ENCODE measurements at regions of chr10 and their contacts with region 1.

Region 1: GRCh38 chr10:100962351-100963080 is 6.8 kb upstream of the SEMA4G start:
- DNase-seq: no peak
- H3K4me3 ChIP-seq: no peak overlapping the region
- H3K27ac ChIP-seq: no peak overlapping the region
- H3K4me1 ChIP-seq: no peaks in the 10 kb centered on the region
- H3K27me3 ChIP-seq: no peaks in the 10 kb centered on the region
- CTCF ChIP-seq: no peak

Region 2: GRCh38 chr10:100927266-100927665 is 35.2 kb before region 1 on chr10:
- CTCF ChIA-PET with region 1: interaction called, 3 read pairs
- dilution Hi-C with region 1: no loop called
- in situ Hi-C with region 1: no loop called
- intact Hi-C with region 1: loop called (anchors 5 kb)
- DNase-seq: no peak
- H3K4me3 ChIP-seq: no peak overlapping the region
- H3K27ac ChIP-seq: no peak overlapping the region
- H3K4me1 ChIP-seq: peaks cover 4% of the 10 kb centered on the region
- H3K27me3 ChIP-seq: no peaks in the 10 kb centered on the region
- CTCF ChIP-seq: no peak

Region 3: DNA sequence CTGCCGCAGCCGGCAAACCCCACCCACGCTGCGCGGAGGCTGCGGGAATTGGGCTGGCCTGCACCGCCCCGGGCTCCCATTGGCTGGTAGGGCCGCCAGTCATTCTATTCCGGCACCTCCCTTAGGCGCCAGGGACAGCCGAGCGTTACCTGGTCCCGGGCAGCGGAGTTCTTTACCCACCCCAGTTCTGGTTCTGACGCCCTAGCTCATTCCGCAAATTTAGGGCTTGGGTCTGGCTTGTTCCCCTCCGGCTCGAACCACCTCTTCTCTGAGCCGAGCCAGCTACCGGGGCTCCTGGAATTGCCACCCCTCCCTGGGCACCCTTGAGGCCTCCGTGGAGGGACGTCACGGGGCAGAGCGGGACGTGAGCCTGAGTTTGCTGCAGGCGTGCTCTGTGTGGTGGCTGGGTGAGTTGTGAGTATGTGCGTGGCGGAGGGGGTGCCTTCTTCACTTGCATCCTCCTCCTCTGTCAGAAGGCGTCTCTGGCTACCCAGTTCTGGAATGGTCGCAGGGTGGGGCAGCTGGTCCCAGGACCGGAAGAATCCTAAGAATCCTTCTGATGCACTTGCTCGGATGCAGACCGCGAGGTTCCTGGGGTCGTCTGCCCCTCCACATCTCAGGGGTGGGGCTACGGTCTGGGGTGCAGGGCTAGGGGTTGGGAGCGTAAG is 68.7 kb after region 1 on chr10 and contains the starts of genes PDZD7 and SFXN3:
- CTCF ChIA-PET with region 1: interaction called, 25 read pairs
- dilution Hi-C with region 1: no loop called
- in situ Hi-C with region 1: no loop called
- intact Hi-C with region 1: no loop called
- DNase-seq: peak; percentile 91
- H3K4me3 ChIP-seq: peak within 1 kb of the TSS; percentile 50 to 74 (median 67)
- H3K27ac ChIP-seq: peak within 1 kb of the TSS; percentile 81
- H3K4me1 ChIP-seq: peaks cover 20% of the 10 kb centered on the region
- H3K27me3 ChIP-seq: no peaks in the 10 kb centered on the region
- CTCF ChIP-seq: no peak
- total RNA-seq, gene PDZD7: 0.59 to 2.7 TPM
- total RNA-seq, gene SFXN3: 79.4 to 102 TPM